Activated naive CD4-positive, alpha-beta T cell treated with anti-CD3 and anti-CD28 coated beads for 36 hours (primary cell): ENCODE measurements at regions of chr17 and their contacts with region 1.

Region 1: GRCh38 chr17:34980681-34981537 is 597 bp downstream of the LIG3 start:
- DNase-seq: peak; percentile 72
- H3K4me3 Mint-ChIP-seq: peak overlapping the region; percentile 95
- H3K27ac Mint-ChIP-seq: peak overlapping the region; percentile 91
- H3K4me1 Mint-ChIP-seq: peaks cover 43% of the 10 kb centered on the region
- H3K27me3 Mint-ChIP-seq: no peaks in the 10 kb centered on the region

Region 2: DNA sequence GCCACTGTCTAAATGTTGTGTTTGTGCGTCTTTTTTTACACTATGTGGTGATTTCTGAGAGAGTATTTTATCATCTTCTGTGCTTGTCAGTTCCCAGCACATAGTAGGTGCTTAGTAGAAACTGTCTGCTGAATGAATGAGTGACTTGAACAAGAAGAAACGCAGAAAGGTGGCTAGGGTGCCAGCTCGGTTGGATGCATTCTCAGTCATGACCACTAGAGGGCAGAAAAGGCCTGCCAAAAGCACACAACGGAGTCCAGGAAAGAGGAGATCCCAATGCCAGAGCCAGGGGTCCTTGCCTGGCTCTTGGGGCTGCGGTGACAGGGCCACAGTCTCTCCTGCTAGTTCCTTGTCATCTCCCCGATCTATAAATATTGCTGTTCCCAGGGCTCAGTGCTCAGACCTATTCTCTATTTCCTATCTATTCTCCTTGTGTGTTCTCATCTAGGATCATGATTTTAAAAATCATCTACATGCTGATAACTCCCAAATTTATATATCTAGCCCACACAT is 560.6 kb before region 1 on chr17:
- CTCF ChIA-PET with region 1: no interaction called
- intact Hi-C with region 1: loop called (anchors 10 kb)
- DNase-seq: peak; percentile 77
- H3K4me3 Mint-ChIP-seq: no peak overlapping the region
- H3K27ac Mint-ChIP-seq: no peak overlapping the region
- H3K4me1 Mint-ChIP-seq: no peaks in the 10 kb centered on the region
- H3K27me3 Mint-ChIP-seq: peaks cover 32% of the 10 kb centered on the region

Region 3: GRCh38 chr17:34542700-34543336 is 438.1 kb before region 1 on chr17:
- CTCF ChIA-PET with region 1: no interaction called
- intact Hi-C with region 1: loop called (anchors 5 kb)
- DNase-seq: peak; percentile 68
- H3K4me3 Mint-ChIP-seq: no peak overlapping the region
- H3K27ac Mint-ChIP-seq: no peak overlapping the region
- H3K4me1 Mint-ChIP-seq: no peaks in the 10 kb centered on the region
- H3K27me3 Mint-ChIP-seq: peaks cover 29% of the 10 kb centered on the region

Region 4: DNA sequence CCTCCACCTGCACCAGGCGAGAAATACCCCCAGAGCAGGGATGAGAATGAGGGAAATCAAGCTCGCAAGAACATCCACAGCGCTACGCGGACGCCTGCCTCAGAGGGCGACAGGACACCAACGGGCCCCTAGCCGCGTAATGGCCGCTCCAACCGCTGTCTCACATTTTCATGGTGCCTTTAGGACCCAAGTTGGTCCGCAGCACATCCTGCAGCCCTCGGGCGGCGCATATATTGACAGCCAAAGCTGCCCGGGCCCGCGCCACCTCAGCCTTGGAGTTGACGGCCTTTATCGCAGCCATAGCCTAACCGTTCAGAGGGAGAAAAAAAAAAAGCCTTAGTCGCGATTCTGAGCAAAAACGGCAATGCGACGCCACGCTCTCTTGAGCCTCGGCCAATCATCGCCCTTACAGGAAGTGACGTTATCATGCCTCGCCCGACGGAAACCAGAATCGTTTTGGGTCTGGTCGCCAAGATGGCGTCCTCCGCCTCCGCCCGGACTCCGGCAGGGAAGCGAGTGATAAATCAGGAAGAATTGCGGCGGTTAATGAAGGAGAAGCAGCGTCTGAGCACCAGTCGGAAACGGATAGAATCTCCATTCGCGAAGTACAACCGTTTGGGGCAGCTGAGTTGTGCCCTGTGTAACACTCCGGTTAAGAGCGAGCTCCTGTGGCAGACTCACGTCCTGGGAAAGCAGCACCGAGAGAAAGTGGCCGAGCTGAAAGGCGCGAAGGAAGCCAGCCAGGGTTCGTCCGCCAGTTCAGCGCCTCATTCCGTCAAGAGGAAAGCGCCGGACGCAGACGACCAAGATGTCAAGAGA is 19.6 kb before region 1 on chr17 and contains the starts of genes CCT6B and ZNF830:
- CTCF ChIA-PET with region 1: interaction called, 5 read pairs
- intact Hi-C with region 1: loop called (anchors 1 kb)
- DNase-seq: peak; percentile 97
- H3K4me3 Mint-ChIP-seq: peak within 1 kb of the TSS; percentile 99
- H3K27ac Mint-ChIP-seq: peak within 1 kb of the TSS; percentile 98
- H3K4me1 Mint-ChIP-seq: peaks cover 22% of the 10 kb centered on the region
- H3K27me3 Mint-ChIP-seq: no peaks in the 10 kb centered on the region
- total RNA-seq, gene CCT6B: 0.69 to 1.5 TPM
- total RNA-seq, gene ZNF830: 17.6 to 18.7 TPM

Region 5: GRCh38 chr17:35214631-35215273 is 233.8 kb after region 1 on chr17:
- CTCF ChIA-PET with region 1: no interaction called
- intact Hi-C with region 1: loop called (anchors 1 kb)
- DNase-seq: peak; percentile 48
- H3K4me3 Mint-ChIP-seq: peak overlapping the region; percentile 45
- H3K27ac Mint-ChIP-seq: peak overlapping the region; percentile 88
- H3K4me1 Mint-ChIP-seq: peaks cover 84% of the 10 kb centered on the region
- H3K27me3 Mint-ChIP-seq: no peaks in the 10 kb centered on the region